AG04449 (cell line): ENCODE measurements at regions of chr2 and their contacts with region 1.

Region 1: GRCh38 chr2:233053928-233054784 is 6.0 kb upstream of the INPP5D start:
- DNase-seq: no peak
- H3K4me3 ChIP-seq: no peak overlapping the region
- CTCF ChIP-seq: peak; percentile 93

Region 2: GRCh38 chr2:232854082-232854481 is 200.1 kb before region 1 on chr2:
- CTCF ChIA-PET with region 1: interaction called, 168 read pairs
- POLR2A ChIA-PET with region 1: no interaction called
- DNase-seq: peak; percentile 38
- H3K4me3 ChIP-seq: no peak overlapping the region
- CTCF ChIP-seq: no peak

Region 3: DNA sequence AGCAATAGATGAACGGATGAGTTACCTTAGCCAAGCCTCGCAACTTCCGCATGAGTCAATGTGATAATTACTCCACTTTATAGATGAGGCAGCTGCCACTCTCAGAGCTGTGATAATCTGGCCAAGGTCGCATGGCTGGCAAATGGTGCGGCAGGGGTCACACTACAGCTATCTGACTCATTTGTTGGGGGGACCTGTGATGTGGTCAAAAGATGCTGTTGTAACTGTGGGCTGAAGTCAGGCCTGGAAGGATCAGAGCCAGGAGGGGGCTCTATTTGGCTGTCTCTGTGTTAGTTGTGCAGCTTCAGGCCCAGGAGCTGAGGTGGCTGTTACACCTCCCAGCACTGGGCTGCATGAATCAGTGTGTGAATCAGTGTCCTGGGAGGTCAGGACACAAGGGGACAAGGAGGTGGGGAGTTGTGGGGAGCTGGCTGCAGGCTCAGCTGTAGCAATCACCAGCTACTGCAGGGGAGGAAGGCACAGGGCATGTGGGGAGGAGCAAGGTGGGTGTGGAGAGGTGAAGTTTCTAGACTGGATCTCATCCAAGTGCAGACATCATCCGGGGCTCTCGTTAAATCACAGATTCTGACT is 74.2 kb before region 1 on chr2:
- CTCF ChIA-PET with region 1: interaction called, 25 read pairs
- POLR2A ChIA-PET with region 1: no interaction called
- DNase-seq: no peak
- H3K4me3 ChIP-seq: no peak overlapping the region
- CTCF ChIP-seq: no peak

Region 4: DNA sequence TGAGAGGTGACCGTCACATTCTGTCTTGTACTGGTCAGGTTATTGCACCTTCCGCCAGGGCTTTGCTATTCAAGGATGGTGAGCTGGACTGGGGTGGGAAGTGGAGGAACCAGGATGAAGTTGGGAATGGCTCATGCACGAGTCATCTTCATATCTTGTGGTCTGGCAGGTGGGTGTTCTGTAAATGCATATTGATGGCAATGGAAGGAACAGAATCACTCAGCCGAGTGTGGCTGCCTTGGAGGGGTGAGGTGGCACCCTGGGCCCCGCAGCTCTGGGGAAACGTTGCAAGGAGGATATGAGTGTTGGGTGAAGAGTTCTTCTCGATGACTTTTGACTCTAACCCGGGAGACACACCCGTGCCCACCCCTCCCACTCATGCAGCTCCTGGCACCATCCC is 20.5 kb before region 1 on chr2:
- CTCF ChIA-PET with region 1: interaction called, 52 read pairs
- POLR2A ChIA-PET with region 1: interaction called, 4 read pairs
- DNase-seq: no peak
- H3K4me3 ChIP-seq: no peak overlapping the region
- CTCF ChIP-seq: no peak

Region 5: DNA sequence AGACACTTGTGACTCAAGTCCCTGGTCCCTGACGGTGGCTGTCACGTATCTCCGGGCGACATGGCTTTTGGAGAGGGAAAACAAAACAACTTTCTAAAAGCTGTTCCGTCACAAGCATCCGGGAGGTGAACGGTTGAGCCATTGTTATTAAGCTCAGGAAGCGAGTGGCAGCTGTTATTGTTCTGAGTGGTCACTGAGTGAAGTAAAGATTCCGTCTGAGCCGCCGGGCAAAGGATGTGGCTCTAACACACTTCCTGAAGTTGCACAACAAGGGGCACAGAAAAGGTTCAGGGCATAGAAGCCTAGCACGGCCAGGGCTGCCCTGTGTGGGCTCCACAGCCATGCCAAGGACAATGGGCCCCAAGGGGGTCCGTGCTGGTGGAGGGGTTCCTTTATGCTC is 30.3 kb after region 1 on chr2:
- CTCF ChIA-PET with region 1: interaction called, 15 read pairs
- POLR2A ChIA-PET with region 1: no interaction called
- DNase-seq: no peak
- H3K4me3 ChIP-seq: no peak overlapping the region
- CTCF ChIP-seq: no peak